ENCODE measurements at regions of chr2 and their contacts with region 1.

Region 1: GRCh38 chr2:240106765-240107476 is 29.2 kb downstream of the COPS9 start:
- DNase-seq: no peak
- H3K4me3 ChIP-seq: no peak overlapping the region
- H3K27ac ChIP-seq: no peak overlapping the region
- H3K27me3 ChIP-seq: peaks cover 7% of the 10 kb centered on the region
- CTCF ChIP-seq: no peak

Region 2: DNA sequence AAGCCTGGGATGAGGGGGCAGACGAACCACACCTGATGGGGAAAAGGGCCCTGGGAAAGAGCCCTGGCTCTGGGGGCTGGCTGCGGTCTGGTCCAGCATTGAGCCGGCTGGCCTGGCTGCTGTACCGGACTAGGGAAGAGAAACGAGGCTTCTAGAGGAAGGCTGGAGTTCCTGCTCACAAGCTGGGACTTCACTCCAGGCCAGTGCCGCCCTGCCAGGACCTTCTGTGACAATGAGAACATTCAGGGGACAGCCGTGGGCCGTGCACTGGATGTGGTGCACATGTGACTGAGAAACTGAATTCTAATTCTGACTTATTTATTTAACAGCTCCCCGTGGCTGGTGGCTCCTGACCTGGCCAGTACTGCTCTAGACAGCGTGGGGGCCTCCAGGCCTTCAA is 975.4 kb before region 1 on chr2:
- CTCF ChIA-PET with region 1: no interaction called
- POLR2A ChIA-PET with region 1: interaction called, 10 read pairs
- DNase-seq: no peak
- H3K4me3 ChIP-seq: no peak overlapping the region
- H3K27ac ChIP-seq: no peak overlapping the region
- H3K27me3 ChIP-seq: no peaks in the 10 kb centered on the region
- CTCF ChIP-seq: no peak

Region 3: GRCh38 chr2:240392741-240393640 is 286.1 kb after region 1 on chr2:
- CTCF ChIA-PET with region 1: no interaction called
- POLR2A ChIA-PET with region 1: no interaction called
- DNase-seq: no peak
- H3K4me3 ChIP-seq: no peak overlapping the region
- H3K27ac ChIP-seq: peak overlapping the region; percentile 11
- H3K27me3 ChIP-seq: no peaks in the 10 kb centered on the region
- CTCF ChIP-seq: no peak

Measured in AG04450 (cell line).